ENCODE measurements at regions of chr12 and their contacts with region 1.

Region 1: DNA sequence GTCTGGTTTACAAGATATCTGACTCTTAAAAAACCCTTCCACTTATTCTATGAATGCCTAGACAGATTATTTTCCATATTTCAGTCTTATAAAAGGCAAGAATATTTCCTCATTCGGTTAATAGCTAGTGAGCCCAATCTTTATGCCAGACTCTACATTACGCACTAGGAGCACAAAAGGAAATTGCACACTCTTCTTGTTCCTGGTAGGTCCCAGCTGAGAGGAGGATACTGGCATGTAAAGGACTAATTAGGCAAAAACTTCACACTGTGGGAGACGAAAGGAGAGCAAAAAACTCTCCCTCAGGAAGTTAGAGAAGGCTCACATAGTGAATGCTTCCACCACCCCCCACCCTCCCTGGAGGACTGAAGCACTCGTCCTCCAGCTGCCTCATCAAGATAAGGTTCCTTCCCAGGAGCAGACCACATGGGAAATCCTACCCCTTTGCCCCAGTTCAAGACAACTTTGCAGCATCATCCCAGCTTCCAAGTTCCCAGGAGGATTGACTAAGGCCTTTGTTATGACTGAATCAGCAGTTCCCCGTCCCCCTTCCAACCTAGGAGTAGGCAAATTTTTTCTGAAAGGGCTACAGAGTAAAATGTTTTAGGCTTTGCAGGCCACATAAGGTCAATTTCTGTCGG is 14.5 kb downstream of the CAPZA3 start:
- DNase-seq: no peak

Region 2: GRCh38 chr12:19138551-19138950 is 386.2 kb after region 1 on chr12:
- intact Hi-C with region 1: loop called (anchors 5 kb)
- DNase-seq: no peak

Region 3: GRCh38 chr12:19236656-19237055 is 484.3 kb after region 1 on chr12:
- intact Hi-C with region 1: loop called (anchors 10 kb)
- DNase-seq: no peak

Measured in cardiac septum (tissue), 1 donor.